Gastrocnemius medialis (tissue), 4 donors: ENCODE measurements at regions of chr15 and their contacts with region 1.

Region 1: DNA sequence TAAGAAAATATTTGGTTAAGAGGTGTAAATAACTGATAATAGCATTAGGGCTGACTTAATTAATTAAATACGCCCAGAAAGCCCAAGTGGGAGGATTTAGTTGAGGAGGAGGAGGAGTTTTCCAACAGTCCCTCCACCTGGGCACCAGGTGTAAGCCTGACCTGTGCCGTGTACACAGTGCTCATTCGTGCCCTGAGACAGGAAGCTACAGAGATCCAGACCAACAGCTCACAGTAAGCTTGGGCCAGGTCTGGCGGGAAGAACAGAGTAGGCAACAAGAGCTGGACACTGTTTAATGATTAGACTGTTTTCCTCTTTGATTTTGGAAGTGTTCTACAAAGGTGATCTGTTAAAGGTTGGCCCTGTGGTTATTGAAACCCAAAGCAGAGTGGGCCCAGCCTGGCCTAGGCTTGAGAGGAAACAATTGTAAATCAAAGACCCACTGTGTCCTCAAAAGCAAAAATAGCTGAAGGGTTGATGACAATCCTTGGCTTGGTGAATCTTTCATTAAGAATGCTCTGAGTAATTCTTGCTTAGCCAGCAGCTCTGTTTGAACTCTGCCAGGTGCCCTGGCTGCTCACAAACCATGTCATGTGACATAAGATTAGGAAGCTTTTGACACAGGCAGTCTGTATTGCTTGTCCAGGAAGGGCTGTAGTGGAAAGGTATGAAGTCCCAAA is 13.8 kb downstream of the SQOR start:
- DNase-seq: peak; percentile 32 to 68
- ATAC-seq: peak; percentile 88 to 96
- H3K4me3 ChIP-seq: no peak overlapping the region
- H3K27ac ChIP-seq: peak overlapping the region; percentile 71 to 76 (median 72)
- H3K4me1 ChIP-seq: peaks cover 51 to 58% of the 10 kb centered on the region in 2 donors
- H3K27me3 ChIP-seq: no peaks in the 10 kb centered on the region
- CTCF ChIP-seq: no peak
- POLR2A ChIP-seq: no peak

Region 2: GRCh38 chr15:45660231-45660979 is 11.7 kb after region 1 on chr15:
- in situ Hi-C with region 1: no loop called
- intact Hi-C with region 1: loop called (anchors 1 kb)
- DNase-seq: peak; percentile 51 to 66
- ATAC-seq: peak; percentile 90 to 94
- H3K4me3 ChIP-seq: no peak overlapping the region
- H3K27ac ChIP-seq: peak overlapping the region; percentile 78 to 81 (median 80)
- H3K4me1 ChIP-seq: peaks cover 32 to 47% of the 10 kb centered on the region in 2 donors
- H3K27me3 ChIP-seq: no peaks in the 10 kb centered on the region
- CTCF ChIP-seq: peak in 2 of 5 experiments; percentile 10 to 29
- POLR2A ChIP-seq: no peak

Region 3: GRCh38 chr15:45732662-45733061 is 84.0 kb after region 1 on chr15:
- in situ Hi-C with region 1: no loop called
- intact Hi-C with region 1: no loop called
- DNase-seq: no peak
- ATAC-seq: no peak
- H3K4me3 ChIP-seq: no peak overlapping the region
- H3K27ac ChIP-seq: no peak overlapping the region
- H3K4me1 ChIP-seq: peaks cover 7% of the 10 kb centered on the region in 2 donors
- H3K27me3 ChIP-seq: peaks cover 0 to 3% (median 0%) of the 10 kb centered on the region in 3 donors
- CTCF ChIP-seq: no peak
- POLR2A ChIP-seq: no peak